Natural killer cell (primary cell): ENCODE measurements at regions of chr14 and their contacts with region 1.

Region 1: GRCh38 chr14:50003213-50004031 is 110.5 kb downstream of the ARF6 start:
- DNase-seq: peak; percentile 80 to 88
- ATAC-seq: peak; percentile 33 to 63 (median 54)
- H3K4me3 ChIP-seq: peak overlapping the region; percentile 48
- H3K4me3 Mint-ChIP-seq: peak overlapping the region; percentile 99
- H3K27ac ChIP-seq: peak overlapping the region; percentile 95
- H3K27ac Mint-ChIP-seq: peak overlapping the region; percentile 100
- H3K4me1 ChIP-seq: peaks cover 59% of the 10 kb centered on the region
- H3K4me1 Mint-ChIP-seq: peaks cover 51 to 57% of the 10 kb centered on the region in 2 donors
- H3K27me3 ChIP-seq: no peaks in the 10 kb centered on the region
- H3K27me3 Mint-ChIP-seq: no peaks in the 10 kb centered on the region
- CTCF ChIP-seq: no peak

Region 2: DNA sequence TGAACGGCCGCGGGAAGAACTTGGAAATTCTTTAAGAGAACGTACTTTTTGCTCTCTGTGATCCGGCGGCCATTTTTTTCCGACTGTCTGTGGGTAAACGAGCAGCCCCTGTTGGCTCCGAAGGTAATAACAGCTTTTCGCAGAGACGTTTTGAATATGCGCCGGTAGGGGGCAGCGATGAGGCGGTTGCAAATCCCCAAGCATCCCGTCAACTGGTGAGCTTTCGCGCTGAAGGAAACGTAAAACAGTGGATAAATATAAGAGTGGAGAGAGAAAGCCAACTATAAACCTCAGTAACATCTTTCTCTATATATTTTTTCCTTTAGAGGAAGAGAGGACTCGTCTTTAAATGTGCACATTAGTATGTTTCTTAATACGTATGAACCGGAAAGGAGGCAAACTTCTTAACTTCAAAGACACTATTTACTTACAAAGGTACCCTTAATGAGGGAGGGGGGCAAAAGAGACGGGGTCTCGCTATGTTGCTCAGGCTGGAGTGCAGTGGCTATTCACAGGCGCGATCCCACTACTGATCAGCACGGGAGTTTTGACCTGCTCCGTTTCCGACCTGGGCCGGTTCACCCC is 141.2 kb before region 1 on chr14:
- intact Hi-C with region 1: loop called (anchors 1 kb)
- DNase-seq: peak; percentile 87 to 94
- ATAC-seq: peak; percentile 34 to 78 (median 38)
- H3K4me3 ChIP-seq: peak overlapping the region; percentile 73
- H3K4me3 Mint-ChIP-seq: no peak overlapping the region
- H3K27ac ChIP-seq: peak overlapping the region; percentile 97
- H3K27ac Mint-ChIP-seq: no peak overlapping the region
- H3K4me1 ChIP-seq: peaks cover 31% of the 10 kb centered on the region
- H3K4me1 Mint-ChIP-seq: no peaks in the 10 kb centered on the region
- H3K27me3 ChIP-seq: no peaks in the 10 kb centered on the region
- H3K27me3 Mint-ChIP-seq: peaks cover 5 to 10% of the 10 kb centered on the region in 2 donors
- CTCF ChIP-seq: peak; percentile 100

Region 3: GRCh38 chr14:49892636-49893308 is 110.7 kb before region 1 on chr14 and contains the start of gene ARF6:
- intact Hi-C with region 1: loop called (anchors 1 kb)
- DNase-seq: peak; percentile 97
- ATAC-seq: peak; percentile 83 to 95 (median 88)
- H3K4me3 ChIP-seq: peak within 1 kb of the TSS; percentile 93
- H3K4me3 Mint-ChIP-seq: peak within 1 kb of the TSS; percentile 100
- H3K27ac ChIP-seq: peak within 1 kb of the TSS; percentile 98
- H3K27ac Mint-ChIP-seq: peak within 1 kb of the TSS; percentile 98 to 100
- H3K4me1 ChIP-seq: peaks cover 10% of the 10 kb centered on the region
- H3K4me1 Mint-ChIP-seq: peaks cover 43 to 47% of the 10 kb centered on the region in 2 donors
- H3K27me3 ChIP-seq: no peaks in the 10 kb centered on the region
- H3K27me3 Mint-ChIP-seq: no peaks in the 10 kb centered on the region
- CTCF ChIP-seq: peak; percentile 16
- total RNA-seq, gene ARF6: 124 to 132 (median 128) TPM

Region 4: GRCh38 chr14:49971156-49972130 is 32.0 kb before region 1 on chr14:
- intact Hi-C with region 1: loop called (anchors 1 kb)
- DNase-seq: peak in 1 of 2 donors; percentile 82
- ATAC-seq: peak; percentile 36 to 72 (median 71)
- H3K4me3 ChIP-seq: no peak overlapping the region
- H3K4me3 Mint-ChIP-seq: peak overlapping the region; percentile 82
- H3K27ac ChIP-seq: peak overlapping the region; percentile 95
- H3K27ac Mint-ChIP-seq: peak overlapping the region; percentile 92 to 95
- H3K4me1 ChIP-seq: peaks cover 40% of the 10 kb centered on the region
- H3K4me1 Mint-ChIP-seq: peaks cover 31 to 33% of the 10 kb centered on the region in 2 donors
- H3K27me3 ChIP-seq: no peaks in the 10 kb centered on the region
- H3K27me3 Mint-ChIP-seq: no peaks in the 10 kb centered on the region
- CTCF ChIP-seq: no peak

Region 5: DNA sequence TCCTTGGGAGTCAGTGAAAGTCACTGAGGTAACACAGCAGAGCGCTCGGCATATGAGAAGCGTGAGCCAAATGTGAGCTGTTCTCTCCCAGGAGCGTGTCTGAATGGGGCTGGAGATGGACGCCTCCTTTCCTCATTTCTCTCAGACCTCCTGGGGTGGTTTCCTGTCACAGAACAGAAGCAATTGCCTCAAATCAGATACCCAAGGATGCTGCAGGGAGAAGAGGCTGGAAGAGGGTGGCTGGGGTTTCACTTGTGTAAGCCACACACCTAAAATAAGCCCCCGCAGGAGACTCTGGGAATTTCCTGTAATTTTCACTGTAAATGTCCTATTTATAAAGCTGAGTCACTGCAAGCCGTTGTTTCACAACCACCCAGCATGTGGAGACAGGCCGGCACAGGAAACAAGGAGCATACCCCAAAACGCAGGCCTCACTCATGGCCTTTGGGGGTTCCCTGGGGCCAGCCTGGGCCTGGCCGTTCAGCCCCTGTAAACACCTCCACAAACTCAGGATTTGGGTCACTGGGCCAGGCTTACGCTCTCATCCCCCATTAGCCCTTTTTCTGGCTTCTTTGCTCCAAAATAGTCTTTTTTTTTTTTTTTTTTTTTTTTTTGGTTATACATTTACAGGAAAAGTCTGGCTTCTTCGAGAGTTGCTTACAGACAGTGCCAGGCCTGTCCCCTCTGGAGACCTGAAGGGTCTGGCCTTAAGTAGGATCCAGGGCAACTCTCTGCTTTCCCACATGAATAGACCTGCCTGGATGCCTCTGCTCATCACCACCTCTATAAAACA is 57.6 kb after region 1 on chr14:
- intact Hi-C with region 1: loop called (anchors 1 kb)
- DNase-seq: peak; percentile 56 to 72
- ATAC-seq: peak; percentile 31 to 46 (median 35)
- H3K4me3 ChIP-seq: no peak overlapping the region
- H3K4me3 Mint-ChIP-seq: peak overlapping the region; percentile 82
- H3K27ac ChIP-seq: peak overlapping the region; percentile 92
- H3K27ac Mint-ChIP-seq: peak overlapping the region; percentile 93 to 95
- H3K4me1 ChIP-seq: peaks cover 81% of the 10 kb centered on the region
- H3K4me1 Mint-ChIP-seq: peaks cover 76 to 83% of the 10 kb centered on the region in 2 donors
- H3K27me3 ChIP-seq: no peaks in the 10 kb centered on the region
- H3K27me3 Mint-ChIP-seq: no peaks in the 10 kb centered on the region
- CTCF ChIP-seq: no peak

Region 6: GRCh38 chr14:50109342-50109741 is 105.9 kb after region 1 on chr14:
- intact Hi-C with region 1: loop called (anchors 1 kb)
- DNase-seq: no peak
- ATAC-seq: no peak
- H3K4me3 ChIP-seq: no peak overlapping the region
- H3K4me3 Mint-ChIP-seq: no peak overlapping the region
- H3K27ac ChIP-seq: no peak overlapping the region
- H3K27ac Mint-ChIP-seq: no peak overlapping the region
- H3K4me1 ChIP-seq: no peaks in the 10 kb centered on the region
- H3K4me1 Mint-ChIP-seq: no peaks in the 10 kb centered on the region
- H3K27me3 ChIP-seq: no peaks in the 10 kb centered on the region
- H3K27me3 Mint-ChIP-seq: no peaks in the 10 kb centered on the region
- CTCF ChIP-seq: no peak

Region 7: DNA sequence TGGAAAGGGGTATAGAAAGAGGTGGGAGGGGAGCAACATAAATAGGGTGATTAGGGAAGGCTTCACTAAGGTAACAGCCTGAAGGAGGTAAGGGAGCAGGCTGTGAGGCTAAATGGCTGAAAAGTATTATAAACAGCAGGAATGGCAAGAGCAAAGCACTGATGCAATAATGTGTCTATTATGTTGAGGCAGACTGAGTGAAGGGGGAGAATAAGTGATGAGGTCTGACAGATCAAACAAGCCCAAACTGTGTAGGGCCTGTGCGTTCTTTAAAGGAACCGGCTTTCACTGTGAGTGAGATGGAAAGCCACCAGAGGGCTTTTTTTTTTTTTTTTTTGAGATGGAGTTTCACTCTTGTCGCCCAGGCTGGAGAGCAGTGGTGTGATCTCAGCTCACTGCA is 119.6 kb after region 1 on chr14:
- intact Hi-C with region 1: no loop called
- DNase-seq: no peak
- ATAC-seq: no peak
- H3K4me3 ChIP-seq: no peak overlapping the region
- H3K4me3 Mint-ChIP-seq: no peak overlapping the region
- H3K27ac ChIP-seq: no peak overlapping the region
- H3K27ac Mint-ChIP-seq: no peak overlapping the region
- H3K4me1 ChIP-seq: no peaks in the 10 kb centered on the region
- H3K4me1 Mint-ChIP-seq: no peaks in the 10 kb centered on the region
- H3K27me3 ChIP-seq: no peaks in the 10 kb centered on the region
- H3K27me3 Mint-ChIP-seq: no peaks in the 10 kb centered on the region
- CTCF ChIP-seq: no peak

Region 8: DNA sequence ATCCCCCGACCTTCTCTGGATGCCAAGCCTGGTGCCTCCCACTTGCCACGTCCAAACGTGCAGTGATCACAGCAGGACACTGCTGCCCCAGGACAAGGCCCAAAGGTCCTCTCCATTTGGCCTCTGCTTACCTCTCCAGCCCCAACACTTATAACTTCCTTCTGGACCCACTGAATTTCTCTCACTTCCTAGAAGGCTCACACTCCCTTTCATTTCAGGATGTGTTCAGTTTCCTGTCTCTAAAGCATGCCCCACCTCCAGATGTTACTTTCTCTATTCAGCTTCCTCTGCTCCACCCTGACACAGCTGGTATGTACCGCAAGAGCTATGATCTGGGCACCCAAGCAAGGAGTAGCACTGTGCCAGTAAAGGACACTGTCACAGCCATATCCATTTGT is 360.3 kb after region 1 on chr14:
- intact Hi-C with region 1: loop called (anchors 5 kb)
- DNase-seq: peak; percentile 30 to 80
- ATAC-seq: peak; percentile 67 to 84 (median 70)
- H3K4me3 ChIP-seq: peak overlapping the region; percentile 44
- H3K4me3 Mint-ChIP-seq: peak overlapping the region; percentile 89
- H3K27ac ChIP-seq: peak overlapping the region; percentile 91
- H3K27ac Mint-ChIP-seq: peak overlapping the region; percentile 92 to 93
- H3K4me1 ChIP-seq: peaks cover 64% of the 10 kb centered on the region
- H3K4me1 Mint-ChIP-seq: peaks cover 50 to 55% of the 10 kb centered on the region in 2 donors
- H3K27me3 ChIP-seq: no peaks in the 10 kb centered on the region
- H3K27me3 Mint-ChIP-seq: no peaks in the 10 kb centered on the region
- CTCF ChIP-seq: no peak